ENCODE measurements at regions of chr5 and their contacts with region 1.

Region 1: GRCh38 chr5:115992848-115993350 is 30.6 kb downstream of the LVRN start:
- DNase-seq: no peak
- H3K4me3 ChIP-seq: no peak overlapping the region
- H3K27ac ChIP-seq: no peak overlapping the region
- H3K4me1 ChIP-seq: no peaks in the 10 kb centered on the region
- H3K27me3 ChIP-seq: no peaks in the 10 kb centered on the region
- CTCF ChIP-seq: no peak
- POLR2A ChIP-seq: no peak

Region 2: DNA sequence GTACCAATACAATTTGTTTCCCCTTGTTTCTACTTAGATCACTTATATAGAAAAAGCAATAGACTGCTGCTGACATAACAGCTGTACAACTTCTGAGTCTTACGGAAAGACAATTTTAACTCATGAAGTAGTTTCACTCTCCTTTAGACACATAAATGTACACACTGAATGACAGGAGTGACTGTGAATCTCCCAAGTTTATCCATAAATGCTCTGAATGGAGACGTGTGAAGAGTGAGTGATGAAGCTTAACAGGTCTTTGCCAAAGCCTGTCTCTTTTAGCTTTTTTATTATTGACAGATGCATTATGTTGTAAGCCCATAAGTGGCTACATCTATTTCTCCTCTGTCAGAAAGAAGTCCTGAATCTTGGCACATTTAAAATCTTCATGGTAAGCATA is 1089.1 kb before region 1 on chr5:
- intact Hi-C with region 1: no loop called
- DNase-seq: no peak
- H3K4me3 ChIP-seq: no peak overlapping the region
- H3K27ac ChIP-seq: no peak overlapping the region
- H3K4me1 ChIP-seq: no peaks in the 10 kb centered on the region
- H3K27me3 ChIP-seq: no peaks in the 10 kb centered on the region
- CTCF ChIP-seq: no peak
- POLR2A ChIP-seq: no peak

Region 3: DNA sequence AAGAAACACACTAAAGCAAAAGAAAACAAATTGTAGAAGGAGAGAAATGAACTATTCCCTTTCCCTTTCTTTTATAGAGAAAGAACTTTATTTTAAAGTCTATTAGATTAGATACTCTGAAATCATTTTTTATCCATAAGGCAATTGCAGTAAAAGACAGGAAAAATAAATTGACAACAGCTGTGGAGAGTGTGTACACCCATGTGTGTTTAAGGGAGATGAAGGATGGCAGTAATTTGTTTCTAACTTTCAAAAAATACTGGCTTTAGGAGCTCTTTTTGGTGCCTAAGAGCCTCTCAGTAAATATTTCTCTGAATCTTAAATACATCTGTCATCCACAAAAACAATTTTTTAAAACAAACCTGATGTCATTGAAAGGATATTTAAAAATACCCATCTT is 21.0 kb after region 1 on chr5:
- intact Hi-C with region 1: loop called (anchors 2 kb)
- DNase-seq: no peak
- H3K4me3 ChIP-seq: no peak overlapping the region
- H3K27ac ChIP-seq: no peak overlapping the region
- H3K4me1 ChIP-seq: no peaks in the 10 kb centered on the region
- H3K27me3 ChIP-seq: no peaks in the 10 kb centered on the region
- CTCF ChIP-seq: no peak
- POLR2A ChIP-seq: no peak

Measured in breast epithelium (tissue), 4 donors.